Caco-2 (cell line): ENCODE measurements at regions of chr1 and their contacts with region 1.

Region 1: DNA sequence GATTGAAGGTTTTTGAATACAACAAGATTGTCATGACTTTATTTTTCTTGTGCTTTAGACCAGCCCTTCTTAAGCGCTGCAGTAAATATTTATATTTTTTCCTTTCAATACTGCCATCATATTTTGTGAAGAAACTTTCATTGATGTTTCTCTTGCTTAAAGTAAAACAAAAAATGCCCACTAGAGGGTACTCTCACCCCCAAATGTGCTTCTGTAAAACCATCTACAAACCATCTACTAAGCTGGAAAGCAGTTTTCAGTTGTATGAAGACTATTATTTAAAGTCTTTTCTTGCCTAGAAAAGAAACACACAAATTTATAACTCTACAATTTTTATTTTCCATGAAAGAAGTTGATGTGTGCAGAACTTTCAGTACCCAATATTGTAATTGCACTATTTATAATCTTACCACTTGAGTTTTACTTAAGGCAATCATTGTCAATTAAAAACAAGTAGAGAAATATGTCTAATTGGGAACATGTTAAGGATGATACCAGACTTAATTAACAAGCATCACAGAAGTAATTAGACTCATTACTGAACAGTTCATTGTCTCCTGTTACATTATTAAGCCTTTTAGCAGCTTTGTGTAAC is 10.7 kb downstream of the LEPR start:
- DNase-seq: peak in 1 of 2 experiments; percentile 25
- H3K4me3 ChIP-seq: no peak overlapping the region
- H3K4me3 Mint-ChIP-seq: no peak overlapping the region
- H3K27ac Mint-ChIP-seq: no peak overlapping the region
- H3K4me1 ChIP-seq: no peaks in the 10 kb centered on the region
- H3K4me1 Mint-ChIP-seq: peaks cover 10% of the 10 kb centered on the region
- H3K27me3 ChIP-seq: no peaks in the 10 kb centered on the region
- H3K27me3 Mint-ChIP-seq: no peaks in the 10 kb centered on the region
- CTCF ChIP-seq: peak; percentile 37 to 45

Region 2: GRCh38 chr1:65235867-65236805 is 195.1 kb before region 1 on chr1:
- CTCF ChIA-PET with region 1: no interaction called
- POLR2A ChIA-PET with region 1: no interaction called
- intact Hi-C with region 1: no loop called
- DNase-seq: no peak
- H3K4me3 ChIP-seq: no peak overlapping the region
- H3K4me3 Mint-ChIP-seq: no peak overlapping the region
- H3K27ac Mint-ChIP-seq: no peak overlapping the region
- H3K4me1 ChIP-seq: no peaks in the 10 kb centered on the region
- H3K4me1 Mint-ChIP-seq: no peaks in the 10 kb centered on the region
- H3K27me3 ChIP-seq: no peaks in the 10 kb centered on the region
- H3K27me3 Mint-ChIP-seq: no peaks in the 10 kb centered on the region
- CTCF ChIP-seq: peak in 1 of 2 experiments; percentile 39

Region 3: GRCh38 chr1:65459397-65459768 is 28.2 kb after region 1 on chr1:
- CTCF ChIA-PET with region 1: interaction called, 14 read pairs
- POLR2A ChIA-PET with region 1: no interaction called
- intact Hi-C with region 1: no loop called
- DNase-seq: peak in 1 of 2 experiments; percentile 14
- H3K4me3 ChIP-seq: no peak overlapping the region
- H3K4me3 Mint-ChIP-seq: no peak overlapping the region
- H3K27ac Mint-ChIP-seq: no peak overlapping the region
- H3K4me1 ChIP-seq: no peaks in the 10 kb centered on the region
- H3K4me1 Mint-ChIP-seq: no peaks in the 10 kb centered on the region
- H3K27me3 ChIP-seq: no peaks in the 10 kb centered on the region
- H3K27me3 Mint-ChIP-seq: no peaks in the 10 kb centered on the region
- CTCF ChIP-seq: peak; percentile 24 to 29

Region 4: DNA sequence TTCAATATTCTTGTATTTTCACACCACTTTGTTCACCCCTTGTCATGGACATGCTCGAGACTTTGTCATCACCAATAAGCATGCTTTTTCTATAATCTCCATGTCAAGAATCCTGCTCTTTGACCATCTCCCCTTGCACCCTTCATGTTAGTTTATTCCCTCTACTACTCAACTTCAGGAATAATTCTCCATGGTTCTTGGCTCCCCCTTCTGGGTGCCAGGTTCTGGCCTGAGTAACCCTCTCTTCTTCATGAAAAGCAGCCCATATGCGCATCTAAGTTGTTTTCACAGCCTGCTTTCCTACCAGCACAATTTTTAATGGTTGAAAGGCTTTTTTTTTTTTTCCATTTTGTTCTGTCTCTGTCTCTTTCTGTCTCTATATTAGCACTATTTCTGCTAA is 149.9 kb after region 1 on chr1:
- CTCF ChIA-PET with region 1: no interaction called
- POLR2A ChIA-PET with region 1: no interaction called
- intact Hi-C with region 1: loop called (anchors 1 kb)
- DNase-seq: peak in 1 of 2 experiments; percentile 3
- H3K4me3 ChIP-seq: no peak overlapping the region
- H3K4me3 Mint-ChIP-seq: no peak overlapping the region
- H3K27ac Mint-ChIP-seq: no peak overlapping the region
- H3K4me1 ChIP-seq: no peaks in the 10 kb centered on the region
- H3K4me1 Mint-ChIP-seq: no peaks in the 10 kb centered on the region
- H3K27me3 ChIP-seq: no peaks in the 10 kb centered on the region
- H3K27me3 Mint-ChIP-seq: no peaks in the 10 kb centered on the region
- CTCF ChIP-seq: peak in 1 of 2 experiments; percentile 32